Dorsolateral prefrontal cortex (tissue), 120 donors: ENCODE measurements at regions of chr17 and their contacts with region 1.

Region 1: GRCh38 chr17:50094753-50095619 is at the start of gene PDK2:
- DNase-seq: peak; percentile 95 to 98 (median 96)
- H3K4me3 ChIP-seq: peak within 1 kb of the TSS; percentile 63 to 100 (median 96)
- H3K27ac ChIP-seq: peak within 1 kb of the TSS; percentile 52 to 99 (median 92)
- H3K27me3 ChIP-seq: no peaks in the 10 kb centered on the region
- CTCF ChIP-seq: peak in 22 of 56 donors; percentile 7 to 42 (median 23)
- total RNA-seq, gene PDK2: 87.1 to 176 (median 131) TPM

Region 2: GRCh38 chr17:50151041-50151936 is 56.3 kb after region 1 on chr17:
- intact Hi-C with region 1: loop called (anchors 2 to 5 kb)
- DNase-seq: peak; percentile 77 to 95 (median 90)
- H3K4me3 ChIP-seq: peak overlapping the region; percentile 51 to 93 (median 84)
- H3K27ac ChIP-seq: peak overlapping the region; percentile 51 to 98 (median 94)
- H3K27me3 ChIP-seq: no peaks in the 10 kb centered on the region
- CTCF ChIP-seq: peak in 55 of 56 donors; percentile 23 to 71 (median 56)

Region 3: GRCh38 chr17:50161023-50161910 is 66.3 kb after region 1 on chr17:
- intact Hi-C with region 1: loop called (anchors 2 kb)
- DNase-seq: peak; percentile 83 to 96 (median 91)
- H3K4me3 ChIP-seq: peak overlapping the region; percentile 51 to 84 (median 68)
- H3K27ac ChIP-seq: peak overlapping the region in 56 of 59 donors; percentile 19 to 88 (median 73)
- H3K27me3 ChIP-seq: no peaks in the 10 kb centered on the region
- CTCF ChIP-seq: peak; percentile 88 to 99 (median 97)

Region 4: DNA sequence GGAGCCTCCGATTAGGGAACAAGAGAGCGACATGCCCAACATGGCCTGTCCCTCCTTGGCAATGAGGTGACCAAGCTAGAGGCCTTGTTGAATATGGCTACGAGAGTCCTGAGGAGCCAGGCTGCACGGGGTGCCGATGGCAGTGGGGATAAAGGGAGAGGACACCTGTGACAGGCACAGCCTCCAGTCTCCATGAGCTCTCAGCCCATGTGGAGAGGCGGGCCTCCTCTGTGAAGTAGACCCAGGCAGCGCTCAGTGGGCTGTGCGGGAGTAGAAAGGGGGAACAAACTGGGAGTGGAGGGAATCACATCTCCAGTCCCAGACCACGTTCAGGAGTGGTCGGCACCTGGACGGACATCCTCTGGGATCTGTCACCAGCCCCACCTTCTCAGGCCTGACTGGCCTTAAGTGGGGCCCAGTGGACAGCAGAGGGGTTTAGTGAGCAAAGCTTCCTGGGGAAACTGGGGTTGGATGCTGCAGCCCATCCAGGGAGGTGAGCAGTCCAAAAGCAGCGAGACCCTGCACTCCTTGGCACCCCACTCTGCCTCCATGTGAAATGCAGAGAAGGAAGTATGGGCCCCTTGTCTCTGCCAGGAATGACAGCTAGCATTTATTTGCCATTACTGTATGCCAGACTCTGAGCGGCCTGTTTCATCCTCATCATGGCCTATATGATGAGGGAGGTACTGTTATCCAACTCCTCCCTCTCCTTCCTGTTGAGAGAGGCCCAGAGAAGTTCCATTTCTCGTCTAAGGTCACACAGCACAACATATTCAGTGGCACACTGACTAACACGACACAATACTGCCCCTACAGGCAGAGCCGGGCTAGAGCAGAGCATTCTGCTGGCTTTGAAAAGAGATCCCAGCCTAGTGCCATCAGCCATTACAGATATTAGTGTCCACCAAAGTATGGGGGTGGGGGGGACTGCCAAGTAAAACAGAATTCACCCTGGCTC is 174.8 kb after region 1 on chr17:
- intact Hi-C with region 1: loop called in 1 of 2 experiments (anchors 10 kb)
- DNase-seq: peak in 9 of 10 donors; percentile 18 to 74 (median 52)
- H3K4me3 ChIP-seq: no peak overlapping the region
- H3K27ac ChIP-seq: peak overlapping the region in 6 of 59 donors; percentile 10 to 58 (median 46)
- H3K27me3 ChIP-seq: peaks cover 0 to 16% (median 9%) of the 10 kb centered on the region in 45 donors
- CTCF ChIP-seq: peak; percentile 25 to 74 (median 60)

Region 5: GRCh38 chr17:50297407-50297865 is 202.4 kb after region 1 on chr17:
- intact Hi-C with region 1: loop called in 1 of 2 experiments (anchors 2 kb)
- DNase-seq: peak; percentile 57 to 84 (median 72)
- H3K4me3 ChIP-seq: no peak overlapping the region
- H3K27ac ChIP-seq: no peak overlapping the region
- H3K27me3 ChIP-seq: no peaks in the 10 kb centered on the region
- CTCF ChIP-seq: peak; percentile 44 to 97 (median 89)